Ascending aorta (tissue), 2 donors: ENCODE measurements at regions of chrX and their contacts with region 1.

Region 1: DNA sequence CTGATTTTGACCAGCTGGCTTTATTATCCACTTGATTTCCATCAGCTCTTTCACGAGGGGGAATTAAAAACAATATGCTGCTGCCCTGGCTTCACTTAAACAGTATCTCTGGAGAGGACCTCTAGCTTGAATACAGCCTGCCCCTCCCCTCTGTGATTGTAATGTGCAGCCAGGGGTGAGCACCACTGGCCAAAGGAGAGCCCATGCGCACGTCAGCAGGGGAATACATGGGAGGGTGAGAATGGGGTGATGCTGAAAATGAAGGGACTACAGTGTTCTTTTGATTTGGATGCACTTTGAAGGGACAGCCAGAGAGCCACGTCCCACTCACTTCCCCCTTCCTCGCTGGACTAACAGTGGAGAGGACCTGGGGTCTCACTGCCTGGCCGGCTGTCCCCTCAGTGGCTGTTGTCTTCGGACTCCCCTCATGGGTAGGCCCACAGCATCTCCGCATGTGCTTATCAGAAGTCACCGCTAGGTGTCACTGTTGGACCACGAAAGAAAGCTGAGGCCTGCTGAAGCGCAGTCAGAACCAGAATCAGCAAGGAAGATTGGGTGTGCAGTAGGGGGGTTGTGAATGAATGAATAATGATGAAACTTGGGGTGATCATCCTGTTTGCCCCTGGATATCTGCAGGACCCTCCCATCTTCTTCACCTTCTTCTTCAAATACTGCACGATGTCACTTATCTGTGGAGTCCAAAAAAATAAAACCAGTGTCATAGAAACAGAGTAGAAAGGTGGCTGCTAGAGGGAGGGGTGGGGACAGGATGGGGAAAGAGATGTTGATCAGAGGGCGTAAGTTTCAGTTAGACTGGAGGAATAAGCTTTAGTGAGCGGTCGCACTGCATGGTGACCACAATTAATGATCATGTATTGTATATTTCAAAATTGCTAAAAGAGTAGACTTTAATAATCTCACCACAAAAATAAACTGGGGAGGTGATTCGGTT is 32.8 kb downstream of the CLCN4 start:
- DNase-seq: peak in 1 of 2 donors; percentile 83
- H3K4me3 ChIP-seq: no peak overlapping the region
- H3K27ac ChIP-seq: no peak overlapping the region
- H3K4me1 ChIP-seq: peaks cover 0 to 5% of the 10 kb centered on the region in 2 donors
- H3K27me3 ChIP-seq: no peaks in the 10 kb centered on the region
- CTCF ChIP-seq: peak; percentile 80 to 88 (median 84)

Region 2: DNA sequence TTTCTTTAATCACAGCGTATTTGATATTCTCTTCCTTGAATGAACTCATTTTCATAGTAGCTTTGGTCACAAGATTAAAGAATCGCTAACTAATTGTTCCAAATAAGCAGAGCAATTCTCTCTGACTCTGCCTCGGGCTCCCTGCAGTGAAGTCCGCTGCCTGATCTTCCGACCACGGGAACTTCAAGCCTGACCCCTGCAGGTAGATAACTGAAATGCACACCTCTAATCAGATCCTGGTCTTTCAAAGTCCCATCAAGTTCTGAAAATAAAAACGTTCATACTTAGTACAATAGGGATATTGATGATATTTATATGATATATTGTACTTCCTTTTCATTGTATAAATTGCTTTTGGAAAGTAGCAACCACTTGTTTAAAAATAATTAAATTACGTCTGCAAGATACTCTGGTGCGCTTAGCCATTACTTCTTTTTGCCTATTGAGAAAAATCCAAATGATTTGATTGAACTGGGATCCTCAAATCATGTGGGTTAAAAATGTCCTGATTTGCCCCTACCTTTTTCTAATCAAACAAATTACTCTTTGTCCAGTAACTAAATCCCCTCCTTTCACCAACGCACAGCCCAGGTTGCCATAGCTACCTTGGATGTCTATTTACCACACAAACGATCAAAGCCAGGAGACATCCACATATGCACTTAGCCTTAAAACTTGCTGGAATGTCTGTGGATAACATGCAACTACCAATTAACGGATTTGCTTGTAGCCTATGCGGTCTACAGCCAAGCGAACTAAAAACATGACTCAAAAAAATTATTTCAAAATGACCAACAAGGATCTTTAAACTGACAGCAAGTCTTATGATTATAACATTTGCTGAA is 426.6 kb after region 1 on chrX:
- intact Hi-C with region 1: loop called (anchors 5 kb)
- DNase-seq: no peak
- H3K4me3 ChIP-seq: no peak overlapping the region
- H3K27ac ChIP-seq: no peak overlapping the region
- H3K4me1 ChIP-seq: peaks cover 0 to 2% of the 10 kb centered on the region in 2 donors
- H3K27me3 ChIP-seq: no peaks in the 10 kb centered on the region
- CTCF ChIP-seq: peak; percentile 39 to 63 (median 60)

Region 3: GRCh38 chrX:10722851-10723250 is 533.3 kb after region 1 on chrX:
- intact Hi-C with region 1: loop called (anchors 1 kb)
- DNase-seq: peak in 1 of 2 donors; percentile 79
- H3K4me3 ChIP-seq: no peak overlapping the region
- H3K27ac ChIP-seq: no peak overlapping the region
- H3K4me1 ChIP-seq: peaks cover 0 to 2% of the 10 kb centered on the region in 2 donors
- H3K27me3 ChIP-seq: no peaks in the 10 kb centered on the region
- CTCF ChIP-seq: peak; percentile 50 to 67 (median 62)

Region 4: DNA sequence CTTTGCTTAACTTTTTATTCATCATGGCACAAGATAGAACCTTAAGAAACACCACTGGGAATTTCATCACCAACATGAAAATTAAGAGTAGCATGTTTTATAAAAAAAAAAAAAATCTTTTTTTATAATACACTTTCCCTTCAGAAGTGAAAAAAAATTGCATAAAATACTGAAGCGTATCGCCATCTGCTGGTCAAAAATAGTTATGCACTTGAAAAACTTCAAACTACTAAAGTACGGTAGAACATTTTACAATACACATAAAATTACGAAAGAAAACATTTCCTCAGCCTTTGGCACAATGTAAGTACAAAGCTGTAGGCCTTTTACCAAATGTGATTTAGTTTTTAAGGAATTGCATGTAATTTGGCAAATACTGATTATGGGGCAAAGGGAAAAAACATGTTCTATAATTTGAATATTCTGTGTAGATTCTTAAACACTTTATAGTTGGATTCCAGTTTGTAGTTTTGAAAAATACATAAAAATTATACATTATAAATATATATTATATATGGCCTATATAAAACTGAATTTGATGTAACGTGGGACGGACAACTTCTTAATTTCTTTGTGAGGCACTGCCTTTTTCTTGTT is 948.0 kb after region 1 on chrX:
- intact Hi-C with region 1: loop called (anchors 1 kb)
- DNase-seq: no peak
- H3K4me3 ChIP-seq: no peak overlapping the region
- H3K27ac ChIP-seq: no peak overlapping the region
- H3K4me1 ChIP-seq: no peaks in the 10 kb centered on the region
- H3K27me3 ChIP-seq: no peaks in the 10 kb centered on the region
- CTCF ChIP-seq: peak; percentile 25 to 73 (median 67)

Region 5: GRCh38 chrX:11758400-11759171 is 1569.0 kb after region 1 on chrX:
- intact Hi-C with region 1: loop called (anchors 10 kb)
- DNase-seq: peak; percentile 29 to 92
- H3K4me3 ChIP-seq: peak overlapping the region; percentile 64 to 73
- H3K27ac ChIP-seq: peak overlapping the region; percentile 75 to 90
- H3K4me1 ChIP-seq: no peaks in the 10 kb centered on the region
- H3K27me3 ChIP-seq: no peaks in the 10 kb centered on the region
- CTCF ChIP-seq: peak; percentile 52 to 60 (median 59)